AG04449 (cell line): ENCODE measurements at regions of chr16 and their contacts with region 1.

Region 1: DNA sequence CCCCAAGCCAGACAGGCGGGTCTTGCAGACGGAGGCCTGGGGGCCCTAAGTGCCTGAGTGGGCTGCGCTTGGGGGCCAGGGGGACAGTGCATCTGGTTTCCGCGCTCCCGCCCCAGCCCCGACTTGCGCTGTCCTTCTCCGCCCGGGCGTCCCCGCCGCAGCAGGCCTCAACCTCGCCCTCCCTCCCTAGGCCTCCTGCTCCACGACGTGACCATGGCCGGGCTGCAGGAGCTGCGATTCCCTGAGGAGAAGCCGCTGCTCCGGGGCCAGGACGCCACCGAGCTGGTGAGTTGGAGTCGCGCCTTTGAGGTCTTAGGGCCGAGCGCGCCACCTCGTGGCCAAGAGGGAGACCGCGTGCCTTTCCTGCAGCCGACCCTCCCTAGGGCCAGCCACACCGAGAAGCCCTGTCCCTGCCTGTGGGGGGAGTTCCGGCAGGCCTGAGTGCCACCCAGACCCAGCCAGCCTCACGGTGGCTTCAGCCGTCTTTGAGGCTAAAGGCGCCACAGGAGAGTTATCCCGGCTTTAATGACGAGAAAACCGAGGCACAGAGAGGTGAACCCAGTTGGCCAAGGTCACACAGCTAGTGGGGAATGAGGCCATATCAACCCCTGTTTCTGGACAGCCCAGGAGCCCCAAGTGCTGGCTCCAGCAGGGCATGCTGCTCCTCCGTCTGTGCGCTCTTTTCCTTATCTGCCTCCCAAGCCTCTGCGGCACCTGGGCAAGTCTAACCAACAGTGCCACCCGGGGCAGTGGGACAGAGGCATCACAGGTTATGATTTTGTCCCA is 12.2 kb upstream of the NDRG4 start:
- DNase-seq: peak; percentile 1
- H3K4me3 ChIP-seq: peak overlapping the region; percentile 20; the same call in 1 of the 2 replicates
- CTCF ChIP-seq: peak; percentile 97

Region 2: GRCh38 chr16:58329147-58329546 is 158.6 kb before region 1 on chr16:
- CTCF ChIA-PET with region 1: interaction called, 262 read pairs
- POLR2A ChIA-PET with region 1: no interaction called
- DNase-seq: no peak
- H3K4me3 ChIP-seq: no peak overlapping the region
- CTCF ChIP-seq: no peak

Region 3: DNA sequence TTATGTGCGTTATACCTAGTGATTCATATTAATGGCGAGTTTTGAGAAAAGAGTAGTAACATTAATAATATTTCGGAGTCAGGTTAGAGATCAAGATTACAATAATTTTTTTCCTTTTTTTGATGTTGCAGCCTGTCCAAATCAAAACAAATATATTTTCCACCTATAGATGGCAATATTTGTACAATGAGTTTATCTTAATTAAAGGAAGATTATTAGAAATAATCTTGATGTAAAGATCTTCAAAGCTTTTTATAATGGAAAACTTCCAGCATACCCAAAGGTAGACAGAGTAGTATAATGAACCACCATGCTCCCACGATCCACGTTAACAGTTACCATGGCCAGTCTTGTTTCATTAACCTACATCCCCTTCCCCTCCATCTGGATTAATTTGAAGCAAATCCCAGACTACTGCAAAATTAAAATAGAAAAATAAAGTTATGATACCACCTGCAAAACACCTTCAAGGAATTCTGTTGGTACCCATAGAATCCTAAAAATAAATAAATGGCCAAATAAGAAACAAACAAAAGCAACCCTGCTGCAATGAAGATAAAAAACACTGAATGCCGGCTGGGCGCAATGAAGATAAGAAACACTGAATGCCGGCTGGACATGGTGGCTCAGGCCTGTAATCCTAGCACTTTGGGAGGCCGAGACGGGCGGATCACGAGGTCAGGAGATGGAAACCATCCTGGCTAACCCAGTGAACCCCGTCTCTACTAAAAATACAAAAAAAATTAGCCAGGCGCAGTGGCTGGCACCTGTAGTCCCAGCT is 142.0 kb before region 1 on chr16:
- CTCF ChIA-PET with region 1: interaction called, 15 read pairs
- POLR2A ChIA-PET with region 1: no interaction called
- DNase-seq: no peak
- H3K4me3 ChIP-seq: no peak overlapping the region
- CTCF ChIP-seq: no peak

Region 4: GRCh38 chr16:58475091-58475619 is 12.6 kb before region 1 on chr16:
- CTCF ChIA-PET with region 1: interaction called, 22 read pairs
- POLR2A ChIA-PET with region 1: no interaction called
- DNase-seq: no peak
- H3K4me3 ChIP-seq: no peak overlapping the region
- CTCF ChIP-seq: no peak

Region 5: DNA sequence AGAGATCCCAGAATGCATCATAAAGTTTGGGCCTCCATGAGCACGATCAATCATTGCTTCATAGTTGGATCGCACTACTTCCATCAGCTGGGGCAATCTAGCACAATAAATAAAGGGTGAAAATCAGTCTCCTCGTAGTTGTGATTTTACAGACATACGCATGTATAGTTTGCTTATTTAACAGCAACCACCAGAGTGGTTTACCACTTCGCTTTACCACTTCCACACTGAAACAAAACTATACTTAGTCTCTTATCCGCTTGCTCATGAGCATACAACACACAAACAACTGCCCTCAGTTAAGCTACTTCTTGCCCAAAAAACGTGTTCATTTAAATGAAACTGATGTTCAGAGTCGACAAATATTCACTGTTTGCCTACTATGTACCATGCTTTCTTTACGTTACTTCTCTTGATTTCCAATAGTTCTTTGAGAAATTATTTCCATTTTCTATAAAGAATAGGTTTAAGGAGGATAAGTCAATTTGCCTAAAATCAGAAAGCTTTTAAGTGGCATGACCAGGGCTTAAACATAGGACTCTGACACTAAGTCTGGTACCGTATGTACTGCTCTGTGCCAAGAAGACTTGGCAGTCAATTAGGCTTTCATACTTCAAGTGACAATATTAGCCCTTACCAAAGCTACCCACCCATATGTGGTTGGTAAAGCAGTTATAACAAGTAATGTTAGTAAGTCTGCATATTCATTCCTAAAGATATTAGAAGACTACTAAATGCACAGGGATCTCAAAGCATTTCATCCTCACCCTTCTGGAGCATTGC is 49.6 kb after region 1 on chr16:
- CTCF ChIA-PET with region 1: no interaction called
- POLR2A ChIA-PET with region 1: no interaction called
- DNase-seq: no peak
- H3K4me3 ChIP-seq: no peak overlapping the region
- CTCF ChIP-seq: no peak